CD4-positive, alpha-beta T cell (primary cell): ENCODE measurements at regions of chr9 and their contacts with region 1.

Region 1: DNA sequence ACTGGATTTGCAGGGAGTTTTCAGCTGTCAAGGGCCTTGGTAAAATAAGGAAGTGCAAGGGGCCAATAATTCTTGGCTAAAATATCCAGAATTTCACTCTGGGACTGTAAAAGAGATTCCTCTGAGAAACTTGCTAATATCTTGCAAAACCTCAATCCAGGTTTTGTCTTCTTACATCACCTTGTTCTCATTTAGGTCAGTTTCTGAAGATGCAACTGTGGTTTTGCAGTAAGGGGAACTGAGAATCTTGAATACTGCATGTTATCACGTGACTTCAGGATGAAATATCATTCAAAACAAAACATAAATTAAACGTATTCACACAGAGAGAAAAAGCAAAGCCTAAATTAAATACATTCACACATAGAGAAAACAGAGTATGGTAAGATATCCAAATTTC is 35.0 kb upstream of the RIC1 start:
- DNase-seq: peak in 1 of 14 experiments; percentile 18
- ATAC-seq: no peak
- H3K4me3 ChIP-seq: no peak overlapping the region
- H3K4me3 Mint-ChIP-seq: no peak overlapping the region
- H3K27ac ChIP-seq: no peak overlapping the region
- H3K27ac Mint-ChIP-seq: no peak overlapping the region
- H3K4me1 ChIP-seq: no peaks in the 10 kb centered on the region
- H3K4me1 Mint-ChIP-seq: peaks cover 11% of the 10 kb centered on the region
- H3K27me3 ChIP-seq: no peaks in the 10 kb centered on the region
- H3K27me3 Mint-ChIP-seq: no peaks in the 10 kb centered on the region
- CTCF ChIP-seq: no peak

Region 2: DNA sequence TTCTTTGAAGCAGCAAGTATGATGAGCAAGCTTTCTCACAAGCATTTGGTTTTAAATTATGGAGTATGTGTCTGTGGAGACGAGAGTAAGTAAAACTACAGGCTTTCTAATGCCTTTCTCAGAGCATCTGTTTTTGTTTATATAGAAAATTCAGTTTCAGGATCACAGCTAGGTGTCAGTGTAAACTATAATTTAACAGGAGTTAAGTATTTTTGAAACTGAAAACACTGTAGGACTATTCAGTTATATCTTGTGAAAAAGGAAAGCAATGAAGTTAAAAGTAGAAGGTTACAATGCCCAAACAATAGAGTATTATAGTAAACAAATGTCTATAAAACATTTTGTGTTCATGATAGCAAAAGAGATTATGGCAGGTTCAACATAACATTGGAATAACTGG is 520.2 kb before region 1 on chr9:
- CTCF ChIA-PET with region 1: no interaction called
- POLR2A ChIA-PET with region 1: no interaction called
- intact Hi-C with region 1: loop called in 1 of 2 experiments (anchors 10 kb)
- DNase-seq: no peak
- ATAC-seq: no peak
- H3K4me3 ChIP-seq: no peak overlapping the region
- H3K4me3 Mint-ChIP-seq: no peak overlapping the region
- H3K27ac ChIP-seq: no peak overlapping the region
- H3K27ac Mint-ChIP-seq: no peak overlapping the region
- H3K4me1 ChIP-seq: no peaks in the 10 kb centered on the region
- H3K4me1 Mint-ChIP-seq: no peaks in the 10 kb centered on the region
- H3K27me3 ChIP-seq: no peaks in the 10 kb centered on the region
- H3K27me3 Mint-ChIP-seq: no peaks in the 10 kb centered on the region
- CTCF ChIP-seq: no peak

Region 3: DNA sequence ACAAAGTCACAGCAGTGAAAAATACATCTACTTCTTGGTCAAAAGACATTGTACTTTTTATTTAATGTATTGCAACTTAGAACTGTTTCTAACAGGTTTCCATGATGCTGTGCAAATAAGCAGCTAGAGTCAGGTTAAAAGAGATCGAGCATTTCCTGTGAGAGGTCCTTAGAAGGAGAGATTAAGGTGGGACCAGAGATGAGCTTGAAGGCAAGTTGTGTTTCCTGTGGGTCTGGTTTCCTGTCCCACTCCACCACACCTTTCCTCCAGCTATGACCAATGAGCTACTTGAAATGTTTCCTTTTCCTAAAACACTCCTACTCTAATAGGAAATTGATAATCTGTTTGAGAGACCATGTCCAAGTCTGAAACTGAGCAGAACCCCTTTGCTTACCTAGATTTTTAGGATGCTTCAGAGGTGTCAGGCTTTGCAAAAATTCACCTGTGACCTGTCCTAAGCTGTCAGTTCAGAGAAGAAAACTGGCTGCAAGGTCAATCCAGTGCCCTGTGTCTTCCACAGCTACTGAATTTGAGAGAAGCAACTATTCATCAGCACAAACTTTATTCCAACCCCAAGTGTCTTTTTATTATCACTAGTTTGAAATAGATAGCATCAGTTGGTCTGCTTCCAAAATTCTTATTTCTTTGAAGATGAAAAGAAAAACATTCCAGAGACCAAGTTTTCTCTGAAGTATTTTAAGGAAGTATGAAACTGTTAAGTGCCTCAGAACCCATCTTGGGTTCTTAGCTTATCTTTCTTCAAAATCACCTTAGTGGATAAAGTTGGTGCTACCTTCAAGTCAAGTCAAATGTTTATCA is 241.1 kb before region 1 on chr9:
- CTCF ChIA-PET with region 1: no interaction called
- POLR2A ChIA-PET with region 1: no interaction called
- intact Hi-C with region 1: loop called in 1 of 2 experiments (anchors 10 kb)
- DNase-seq: peak in 5 of 14 experiments; percentile 9 to 81 (median 26)
- ATAC-seq: peak; percentile 74
- H3K4me3 ChIP-seq: no peak overlapping the region
- H3K4me3 Mint-ChIP-seq: peak overlapping the region; percentile 59
- H3K27ac ChIP-seq: no peak overlapping the region
- H3K27ac Mint-ChIP-seq: peak overlapping the region; percentile 59
- H3K4me1 ChIP-seq: peaks cover 27% of the 10 kb centered on the region
- H3K4me1 Mint-ChIP-seq: peaks cover 48% of the 10 kb centered on the region
- H3K27me3 ChIP-seq: no peaks in the 10 kb centered on the region
- H3K27me3 Mint-ChIP-seq: no peaks in the 10 kb centered on the region
- CTCF ChIP-seq: no peak

Region 4: DNA sequence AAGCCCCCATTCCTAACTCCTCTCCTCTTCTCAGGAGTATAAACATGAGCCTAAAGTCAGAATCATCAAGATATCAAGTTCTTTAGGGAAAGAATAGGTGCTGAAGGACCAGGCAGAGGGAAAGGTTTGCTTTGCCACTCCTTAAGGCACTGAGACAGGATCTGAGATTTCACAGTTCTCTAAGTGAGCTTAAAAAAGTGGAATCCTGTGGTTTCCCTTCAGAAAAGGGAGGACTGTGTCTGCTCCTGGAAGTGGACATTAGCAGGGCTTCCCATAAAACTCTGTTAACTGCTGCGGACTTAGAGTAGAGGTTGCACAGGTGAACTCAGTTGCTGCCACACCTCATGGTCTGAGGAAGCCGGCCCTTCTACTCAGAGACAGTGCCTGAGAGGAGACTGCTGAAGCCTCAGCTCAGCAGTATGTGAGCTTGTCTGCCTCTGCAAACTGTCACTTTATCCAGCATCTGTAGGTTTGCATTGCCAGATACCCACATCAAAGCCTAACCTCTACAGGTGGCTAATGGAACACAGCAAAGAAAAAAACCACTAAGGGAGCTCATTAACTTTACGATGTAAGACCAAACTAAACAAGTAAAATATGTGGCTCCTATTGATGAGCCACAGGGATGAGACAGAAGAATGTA is 77.9 kb after region 1 on chr9:
- CTCF ChIA-PET with region 1: no interaction called
- POLR2A ChIA-PET with region 1: no interaction called
- intact Hi-C with region 1: no loop called
- DNase-seq: peak in 6 of 14 experiments; percentile 2 to 73 (median 48)
- ATAC-seq: peak; percentile 96
- H3K4me3 ChIP-seq: no peak overlapping the region
- H3K4me3 Mint-ChIP-seq: peak overlapping the region; percentile 26
- H3K27ac ChIP-seq: no peak overlapping the region
- H3K27ac Mint-ChIP-seq: peak overlapping the region; percentile 38
- H3K4me1 ChIP-seq: peaks cover 17% of the 10 kb centered on the region
- H3K4me1 Mint-ChIP-seq: peaks cover 47% of the 10 kb centered on the region
- H3K27me3 ChIP-seq: no peaks in the 10 kb centered on the region
- H3K27me3 Mint-ChIP-seq: no peaks in the 10 kb centered on the region
- CTCF ChIP-seq: no peak